GM10248 (cell line): ENCODE measurements at regions of chr2 and their contacts with region 1.

Region 1: DNA sequence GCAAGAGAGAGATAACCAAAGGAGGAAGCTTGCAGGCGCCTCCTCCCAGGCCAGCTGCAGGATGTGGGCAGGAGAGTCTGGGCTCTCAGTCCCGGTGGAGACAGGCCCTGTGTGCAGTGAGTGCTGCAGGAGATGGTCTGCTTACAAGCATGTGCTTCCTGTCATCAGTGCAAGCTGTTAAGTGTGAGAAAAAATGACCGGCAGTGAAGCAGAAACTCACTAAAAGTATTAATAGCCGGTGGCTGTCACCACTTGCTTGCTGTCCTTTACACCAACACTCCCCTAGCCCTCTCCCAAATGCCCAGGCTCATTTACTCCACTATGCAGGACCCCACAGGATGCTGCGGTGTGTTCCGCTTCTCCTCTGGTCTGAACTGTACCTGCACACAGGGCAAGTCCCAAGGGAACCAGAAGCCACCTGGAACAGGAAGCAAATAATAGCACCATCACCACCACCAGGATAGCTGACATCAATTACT is 435.6 kb upstream of the HS6ST1 start:
- DNase-seq: peak; percentile 73
- CTCF ChIP-seq: no peak

Region 2: DNA sequence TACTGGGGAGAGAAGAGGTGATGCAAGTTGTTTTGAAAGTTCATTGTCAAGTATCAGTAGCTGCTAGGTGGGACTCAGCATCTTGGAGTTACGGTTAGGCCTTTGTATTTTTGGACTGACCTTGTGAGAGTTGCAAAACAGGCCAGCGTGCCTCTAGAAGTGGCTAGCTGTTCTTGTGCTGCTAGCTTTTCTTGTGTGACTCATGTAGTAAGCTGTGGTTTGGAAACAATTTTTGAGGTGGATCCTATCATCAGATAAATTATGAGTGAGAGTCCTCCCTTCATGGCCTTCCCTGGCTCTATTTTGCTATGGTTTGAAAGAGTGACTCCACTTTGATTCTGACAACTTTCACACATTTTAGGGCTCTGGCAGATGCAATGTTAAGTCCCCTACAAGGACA is 26.4 kb before region 1 on chr2:
- CTCF ChIA-PET with region 1: interaction called, 11 read pairs
- POLR2A ChIA-PET with region 1: no interaction called
- DNase-seq: no peak
- CTCF ChIP-seq: no peak

Region 3: GRCh38 chr2:128736689-128737545 is 17.4 kb before region 1 on chr2:
- CTCF ChIA-PET with region 1: interaction called, 18 read pairs
- POLR2A ChIA-PET with region 1: no interaction called
- DNase-seq: peak; percentile 88
- CTCF ChIP-seq: peak; percentile 95